Naive thymus-derived CD4-positive, alpha-beta T cell (primary cell): ENCODE measurements at regions of chr11 and their contacts with region 1.

Region 1: DNA sequence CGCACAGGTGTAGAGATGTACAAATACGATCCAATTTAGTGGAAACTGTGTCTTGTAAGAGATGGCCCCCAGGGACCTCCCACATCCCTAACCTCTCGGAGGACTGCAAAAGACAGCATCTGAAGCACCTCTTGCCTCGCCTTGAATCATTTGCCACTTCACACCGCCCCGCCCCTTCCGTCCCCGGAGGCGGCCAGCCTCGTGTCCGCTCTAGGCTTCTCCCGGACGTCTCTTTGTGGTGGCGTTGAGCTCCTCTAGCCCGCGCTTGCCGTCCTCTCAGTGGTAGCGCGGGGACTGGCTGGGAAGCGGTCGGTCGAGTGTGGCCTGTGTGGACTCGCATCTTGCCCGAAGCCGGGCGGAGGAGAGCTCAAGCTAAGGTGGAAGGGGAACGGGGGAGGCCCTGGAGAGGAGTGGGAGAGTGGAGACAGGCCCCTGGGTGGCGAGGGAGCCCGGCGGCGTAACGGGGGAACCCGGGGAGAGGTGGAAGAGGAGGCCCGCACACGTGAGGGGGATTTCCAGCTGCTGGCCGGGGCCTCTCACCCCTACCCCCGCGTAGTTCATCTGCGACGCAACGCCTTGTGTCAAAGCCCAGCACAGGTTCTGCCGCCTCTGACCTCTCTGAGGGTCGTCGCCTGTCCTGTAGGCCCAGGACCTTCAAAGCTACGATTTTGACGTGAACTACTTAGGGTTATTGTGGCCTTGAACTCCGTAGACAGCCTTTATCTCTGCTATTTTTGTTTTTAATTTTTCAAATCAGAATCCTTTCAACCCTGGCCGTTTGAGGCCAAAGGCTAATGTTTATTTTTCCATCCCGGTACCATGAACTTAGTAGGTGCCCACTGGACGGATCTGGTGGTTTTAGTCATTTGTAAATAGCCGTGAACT is at the start of gene ARL14EP:
- DNase-seq: peak; percentile 72 to 88 (median 81)
- ATAC-seq: peak; percentile 94
- H3K4me3 ChIP-seq: peak within 1 kb of the TSS; percentile 77
- H3K4me3 Mint-ChIP-seq: peak within 1 kb of the TSS; percentile 92 to 100 (median 99)
- H3K27ac ChIP-seq: peak within 1 kb of the TSS; percentile 90
- H3K27ac Mint-ChIP-seq: peak within 1 kb of the TSS; percentile 97 to 100 (median 98)
- H3K4me1 ChIP-seq: peaks cover 28 to 32% of the 10 kb centered on the region in 2 donors
- H3K4me1 Mint-ChIP-seq: peaks cover 32 to 59% (median 55%) of the 10 kb centered on the region in 7 donors
- H3K27me3 ChIP-seq: no peaks in the 10 kb centered on the region
- H3K27me3 Mint-ChIP-seq: peaks cover 0 to 19% (median 14%) of the 10 kb centered on the region in 5 donors
- total RNA-seq, gene ARL14EP: 20.8 to 45.8 (median 43.5) TPM

Region 2: DNA sequence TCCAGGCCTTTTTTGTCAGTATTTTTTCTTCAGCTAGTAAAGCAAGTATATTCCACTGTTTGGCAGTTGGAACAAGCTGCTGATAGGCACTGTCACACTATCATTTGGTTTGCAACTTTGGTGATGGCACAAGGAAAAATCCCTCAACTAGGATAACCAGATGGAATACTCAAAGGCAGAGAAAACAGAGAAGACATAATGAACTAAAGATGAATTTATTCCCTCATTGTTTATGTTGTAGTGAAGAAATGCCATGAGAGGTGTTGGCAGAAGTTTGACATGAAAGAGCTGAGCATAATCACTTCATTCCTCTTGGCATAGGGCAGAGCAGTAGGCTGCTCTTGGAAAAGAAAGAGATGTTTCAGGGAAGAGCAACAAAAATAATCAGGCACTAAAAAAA is 52.4 kb before region 1 on chr11:
- CTCF ChIA-PET with region 1: no interaction called
- POLR2A ChIA-PET with region 1: no interaction called
- intact Hi-C with region 1: no loop called
- DNase-seq: no peak
- ATAC-seq: no peak
- H3K4me3 ChIP-seq: no peak overlapping the region
- H3K4me3 Mint-ChIP-seq: no peak overlapping the region
- H3K27ac ChIP-seq: no peak overlapping the region
- H3K27ac Mint-ChIP-seq: no peak overlapping the region
- H3K4me1 ChIP-seq: no peaks in the 10 kb centered on the region
- H3K4me1 Mint-ChIP-seq: no peaks in the 10 kb centered on the region
- H3K27me3 ChIP-seq: no peaks in the 10 kb centered on the region
- H3K27me3 Mint-ChIP-seq: peaks cover 7 to 36% (median 30%) of the 10 kb centered on the region in 5 donors

Region 3: DNA sequence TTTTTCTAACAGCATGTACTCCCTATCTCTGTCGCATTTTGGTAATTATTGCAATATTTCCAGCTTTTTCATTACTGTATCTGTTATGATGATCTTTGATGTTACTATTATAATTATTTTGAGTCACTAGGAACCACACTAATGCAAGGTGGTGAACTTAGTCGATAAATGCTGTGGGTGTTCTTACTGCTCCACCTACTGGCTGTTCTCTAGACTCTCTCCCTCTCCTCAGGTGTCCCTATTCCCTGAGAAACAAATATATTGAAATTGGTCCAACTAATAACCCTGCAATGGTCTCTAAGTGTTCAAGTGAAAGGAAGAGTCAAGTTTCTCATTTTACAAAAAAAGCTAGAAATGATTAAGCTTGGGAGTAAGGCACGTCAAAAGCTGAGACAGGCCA is 10.3 kb after region 1 on chr11:
- CTCF ChIA-PET with region 1: interaction called, 3 read pairs
- POLR2A ChIA-PET with region 1: interaction called, 8 read pairs
- intact Hi-C with region 1: loop called in 1 of 2 experiments (anchors 2 kb)
- DNase-seq: no peak
- ATAC-seq: no peak
- H3K4me3 ChIP-seq: no peak overlapping the region
- H3K4me3 Mint-ChIP-seq: no peak overlapping the region
- H3K27ac ChIP-seq: no peak overlapping the region
- H3K27ac Mint-ChIP-seq: peak overlapping the region in 2 of 9 donors; percentile 1 to 3
- H3K4me1 ChIP-seq: no peaks in the 10 kb centered on the region
- H3K4me1 Mint-ChIP-seq: peaks cover 10 to 38% (median 31%) of the 10 kb centered on the region in 7 donors
- H3K27me3 ChIP-seq: no peaks in the 10 kb centered on the region
- H3K27me3 Mint-ChIP-seq: no peaks in the 10 kb centered on the region

Region 4: GRCh38 chr11:30346068-30346688 is 23.1 kb after region 1 on chr11:
- CTCF ChIA-PET with region 1: interaction called, 4 read pairs
- POLR2A ChIA-PET with region 1: interaction called, 5 read pairs
- intact Hi-C with region 1: loop called (anchors 1 to 2 kb)
- DNase-seq: peak in 7 of 9 donors; percentile 29 to 58 (median 39)
- ATAC-seq: peak; percentile 75
- H3K4me3 ChIP-seq: no peak overlapping the region
- H3K4me3 Mint-ChIP-seq: no peak overlapping the region
- H3K27ac ChIP-seq: no peak overlapping the region
- H3K27ac Mint-ChIP-seq: no peak overlapping the region
- H3K4me1 ChIP-seq: no peaks in the 10 kb centered on the region
- H3K4me1 Mint-ChIP-seq: peaks cover 0 to 17% (median 9%) of the 10 kb centered on the region in 7 donors
- H3K27me3 ChIP-seq: no peaks in the 10 kb centered on the region
- H3K27me3 Mint-ChIP-seq: peaks cover 0 to 12% (median 0%) of the 10 kb centered on the region in 5 donors

Region 5: GRCh38 chr11:31509429-31510345 is 1186.6 kb after region 1 on chr11 and contains the starts of genes ELP4 and IMMP1L:
- CTCF ChIA-PET with region 1: no interaction called
- POLR2A ChIA-PET with region 1: no interaction called
- intact Hi-C with region 1: loop called (anchors 2 to 5 kb)
- DNase-seq: peak; percentile 86 to 97 (median 95)
- ATAC-seq: peak; percentile 100
- H3K4me3 ChIP-seq: peak within 1 kb of the TSS; percentile 85
- H3K4me3 Mint-ChIP-seq: peak within 1 kb of the TSS; percentile 89 to 100 (median 99)
- H3K27ac ChIP-seq: peak within 1 kb of the TSS; percentile 79
- H3K27ac Mint-ChIP-seq: peak within 1 kb of the TSS; percentile 92 to 100 (median 98)
- H3K4me1 ChIP-seq: peaks cover 13 to 14% of the 10 kb centered on the region in 2 donors
- H3K4me1 Mint-ChIP-seq: peaks cover 21 to 70% (median 49%) of the 10 kb centered on the region in 7 donors
- H3K27me3 ChIP-seq: no peaks in the 10 kb centered on the region
- H3K27me3 Mint-ChIP-seq: peaks cover 0 to 2% (median 0%) of the 10 kb centered on the region in 5 donors
- total RNA-seq, gene ELP4: 16.8 to 23.2 (median 21.2) TPM
- total RNA-seq, gene IMMP1L: 9.4 to 20.0 (median 16.1) TPM

Region 6: DNA sequence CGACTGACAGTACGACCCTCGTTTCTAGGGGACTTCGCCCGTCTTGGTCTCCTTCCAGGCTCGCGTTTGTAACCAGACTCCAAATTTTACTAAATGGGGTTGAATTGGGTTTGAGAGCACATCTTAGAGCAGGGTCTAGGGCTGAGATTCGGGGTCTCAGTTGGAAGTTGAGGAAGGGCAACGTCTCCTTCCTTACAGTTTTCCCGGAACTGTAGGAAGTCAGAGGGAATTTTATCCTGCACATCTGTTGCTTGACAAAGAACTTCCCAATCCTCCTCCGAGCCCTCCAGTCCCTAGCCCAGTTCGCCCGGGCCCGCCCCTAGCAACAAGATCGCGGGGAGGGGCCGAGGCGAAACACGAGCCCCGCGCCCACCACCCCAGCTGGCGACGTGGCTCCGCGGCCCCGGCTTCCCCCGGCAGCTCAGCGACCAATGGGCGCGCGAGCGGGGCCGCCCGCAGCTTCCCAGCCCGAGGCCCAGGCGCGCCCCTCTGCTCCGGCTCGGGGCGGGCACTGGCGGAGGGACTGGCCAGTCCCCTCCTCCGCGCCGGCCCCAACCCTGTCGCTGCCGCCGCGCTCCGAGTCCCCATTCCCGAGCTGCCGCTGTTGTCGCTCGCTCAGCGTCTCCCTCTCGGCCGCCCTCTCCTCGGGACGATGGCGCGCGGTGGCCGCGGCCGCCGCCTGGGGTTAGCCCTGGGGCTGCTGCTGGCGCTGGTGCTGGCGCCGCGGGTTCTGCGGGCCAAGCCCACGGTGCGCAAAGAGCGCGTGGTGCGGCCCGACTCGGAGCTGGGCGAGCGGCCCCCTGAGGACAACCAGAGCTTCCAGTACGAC is 1767.7 kb after region 1 on chr11 and contains the start of gene RCN1:
- CTCF ChIA-PET with region 1: no interaction called
- POLR2A ChIA-PET with region 1: no interaction called
- intact Hi-C with region 1: loop called (anchors 2 kb)
- DNase-seq: peak in 3 of 9 donors; percentile 14 to 64 (median 54)
- ATAC-seq: peak; percentile 66
- H3K4me3 ChIP-seq: peak within 1 kb of the TSS; percentile 83
- H3K4me3 Mint-ChIP-seq: peak within 1 kb of the TSS; percentile 74 to 89 (median 84)
- H3K27ac ChIP-seq: peak within 1 kb of the TSS; percentile 81
- H3K27ac Mint-ChIP-seq: peak within 1 kb of the TSS; percentile 74 to 90 (median 83)
- H3K4me1 ChIP-seq: peaks cover 4 to 8% of the 10 kb centered on the region in 2 donors
- H3K4me1 Mint-ChIP-seq: peaks cover 12 to 36% (median 24%) of the 10 kb centered on the region in 7 donors
- H3K27me3 ChIP-seq: peaks cover 0 to 4% of the 10 kb centered on the region in 2 donors
- H3K27me3 Mint-ChIP-seq: peaks cover 5 to 19% (median 16%) of the 10 kb centered on the region in 5 donors
- total RNA-seq, gene RCN1: 5.5 to 26.8 (median 9.6) TPM